Left cardiac atrium (tissue), 4 donors: ENCODE measurements at regions of chrX and their contacts with region 1.

Region 1: DNA sequence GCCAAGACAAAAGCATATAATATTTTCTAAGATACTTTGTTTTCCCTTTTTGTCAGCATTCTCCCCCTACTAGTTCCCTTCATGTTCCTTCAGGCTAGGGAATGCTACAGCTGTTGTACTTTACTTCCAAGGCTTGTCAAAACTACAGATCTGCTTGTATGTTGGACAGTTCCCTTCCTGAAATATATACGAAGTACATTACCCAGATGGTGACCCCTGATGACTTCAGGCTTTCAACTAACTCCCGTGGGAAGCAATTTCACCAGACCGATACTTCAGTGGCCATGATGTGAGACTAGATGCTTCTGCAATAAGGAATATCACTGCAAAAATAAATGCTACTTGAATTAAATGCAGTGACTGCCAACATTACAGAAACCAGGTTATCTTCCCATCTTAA is 332.8 kb downstream of the SH2D1A start:
- DNase-seq: no peak
- ATAC-seq: no peak

Region 2: DNA sequence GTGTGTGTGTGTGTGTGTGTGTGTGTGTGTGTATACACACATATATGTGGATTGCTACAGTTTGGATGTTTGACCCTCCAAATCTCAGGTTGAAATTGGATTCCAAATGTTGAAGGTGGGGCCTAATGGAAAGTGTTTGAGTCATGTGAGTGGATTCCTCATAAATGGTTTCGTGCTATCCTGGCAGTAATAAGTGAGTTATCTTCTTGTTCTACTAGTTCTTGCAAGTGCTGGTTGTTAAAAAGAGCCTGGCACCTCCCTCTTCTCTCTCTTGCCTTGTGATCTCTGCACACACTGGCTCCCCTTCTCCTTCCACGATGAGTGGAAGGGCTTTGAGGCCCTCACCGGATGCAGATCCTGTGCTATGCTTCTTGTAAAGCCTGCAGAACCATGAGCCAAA is 11.3 kb after region 1 on chrX:
- intact Hi-C with region 1: loop called in 1 of 2 experiments (anchors 1 kb)
- DNase-seq: no peak
- ATAC-seq: no peak

Region 3: GRCh38 chrX:124887572-124887971 is 208.4 kb after region 1 on chrX:
- intact Hi-C with region 1: no loop called
- DNase-seq: no peak
- ATAC-seq: no peak